Activated B cell treated with CpG ODN at 0.5 μM for 24 hours (primary cell): ENCODE measurements at regions of chr4 and their contacts with region 1.

Region 1: GRCh38 chr4:152663203-152664066 is 16.4 kb downstream of the TMEM154 start:
- DNase-seq: no peak
- ATAC-seq: peak; percentile 73
- H3K4me3 Mint-ChIP-seq: peak overlapping the region; percentile 77
- H3K27ac Mint-ChIP-seq: peak overlapping the region; percentile 93
- H3K4me1 Mint-ChIP-seq: peaks cover 94% of the 10 kb centered on the region
- H3K27me3 Mint-ChIP-seq: no peaks in the 10 kb centered on the region
- CTCF ChIP-seq: no peak

Region 2: GRCh38 chr4:152696764-152697261 is 33.4 kb after region 1 on chr4:
- CTCF ChIA-PET with region 1: no interaction called
- POLR2A ChIA-PET with region 1: no interaction called
- intact Hi-C with region 1: loop called (anchors 1 kb)
- DNase-seq: no peak
- ATAC-seq: peak; percentile 95
- H3K4me3 Mint-ChIP-seq: peak overlapping the region; percentile 6
- H3K27ac Mint-ChIP-seq: peak overlapping the region; percentile 60
- H3K4me1 Mint-ChIP-seq: peaks cover 40% of the 10 kb centered on the region
- H3K27me3 Mint-ChIP-seq: peaks cover 1% of the 10 kb centered on the region
- CTCF ChIP-seq: no peak